ENCODE measurements at regions of chr12 and their contacts with region 1.

Region 1: GRCh38 chr12:53543539-53543938 is 36.3 kb upstream of the NPFF start:
- DNase-seq: peak in 3 of 4 donors; percentile 32 to 71 (median 45)
- ATAC-seq: peak; percentile 92
- H3K4me3 ChIP-seq: no peak overlapping the region
- H3K27ac ChIP-seq: peak overlapping the region; percentile 1 to 57
- H3K4me1 ChIP-seq: peaks cover 5 to 24% of the 10 kb centered on the region in 2 donors
- H3K27me3 ChIP-seq: no peaks in the 10 kb centered on the region
- CTCF ChIP-seq: peak; percentile 73

Region 2: GRCh38 chr12:53675651-53676453 is 132.3 kb after region 1 on chr12 and contains the start of gene ATP5MC2:
- intact Hi-C with region 1: loop called in 1 of 2 experiments (anchors 5 kb)
- DNase-seq: peak; percentile 98 to 99 (median 98)
- ATAC-seq: peak; percentile 96
- H3K4me3 ChIP-seq: peak within 1 kb of the TSS; percentile 61 to 74
- H3K27ac ChIP-seq: peak within 1 kb of the TSS; percentile 89 to 93
- H3K4me1 ChIP-seq: peaks cover 14 to 40% of the 10 kb centered on the region in 2 donors
- H3K27me3 ChIP-seq: peaks cover 0 to 19% of the 10 kb centered on the region in 2 donors
- CTCF ChIP-seq: peak; percentile 97 to 99
- polyA plus RNA-seq, gene ATP5MC2: 584 to 653 (median 621) TPM